Right cardiac atrium (tissue), 5 donors: ENCODE measurements at regions of chr2 and their contacts with region 1.

Region 1: DNA sequence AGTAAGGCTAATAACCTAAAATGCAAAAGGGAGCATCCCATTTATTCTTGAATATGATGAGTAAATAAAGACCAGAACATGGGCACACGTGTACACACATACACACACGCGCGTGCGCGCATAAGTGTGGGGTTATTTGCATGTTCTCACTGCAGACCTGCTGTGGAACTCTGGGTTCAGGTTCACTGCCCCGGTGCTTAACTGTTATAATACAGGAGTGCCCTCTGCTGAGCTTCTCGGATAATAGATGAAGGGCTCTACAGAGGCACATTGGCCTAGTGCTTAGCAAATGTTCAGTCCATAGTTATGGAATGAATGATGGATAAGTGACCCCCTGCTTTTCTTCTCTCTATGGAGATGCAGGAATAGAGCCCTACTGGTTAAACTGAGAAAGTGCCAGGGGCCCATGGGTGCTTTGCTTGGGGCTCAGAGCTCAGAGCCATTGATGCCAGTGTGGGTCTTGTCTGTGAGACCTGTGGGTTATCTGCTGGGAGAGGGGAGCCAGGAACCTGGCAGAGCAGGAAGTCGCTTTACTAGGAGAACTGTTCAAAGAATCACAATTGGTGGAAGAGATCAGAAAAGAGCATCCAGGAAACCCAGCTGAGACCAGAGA is 3.6 kb upstream of the ARL4C start:
- DNase-seq: peak in 2 of 3 donors; percentile 32 to 69
- ATAC-seq: peak; percentile 50 to 58
- H3K4me3 ChIP-seq: no peak overlapping the region
- H3K27ac ChIP-seq: no peak overlapping the region
- H3K4me1 ChIP-seq: peaks cover 6% of the 10 kb centered on the region
- H3K27me3 ChIP-seq: no peaks in the 10 kb centered on the region

Region 2: DNA sequence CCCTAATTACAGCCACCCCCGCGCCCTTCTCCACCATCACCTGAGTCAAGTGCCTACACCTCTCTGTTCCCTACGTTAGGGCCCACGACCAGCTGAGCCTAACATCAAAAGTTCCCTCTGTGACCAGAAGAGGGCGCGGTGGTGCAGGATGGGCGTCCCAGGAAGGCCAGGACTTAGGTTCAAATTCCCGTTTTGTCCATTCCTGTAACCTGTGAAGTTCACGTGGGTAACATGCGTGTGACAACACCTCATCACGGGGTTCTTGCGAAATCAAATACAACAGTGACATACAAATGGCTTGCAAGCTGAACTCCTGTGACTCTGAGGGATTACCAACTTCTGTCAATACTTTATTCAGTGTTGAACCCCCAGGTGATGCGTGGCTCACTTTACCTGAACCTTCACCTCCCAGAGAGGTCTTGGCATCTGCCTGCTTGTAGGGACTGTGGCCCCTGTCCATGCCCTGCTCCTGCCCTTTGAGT is 211.5 kb before region 1 on chr2:
- intact Hi-C with region 1: loop called (anchors 5 to 10 kb)
- DNase-seq: peak; percentile 53 to 77 (median 70)
- ATAC-seq: peak; percentile 30 to 40
- H3K4me3 ChIP-seq: no peak overlapping the region
- H3K27ac ChIP-seq: no peak overlapping the region
- H3K4me1 ChIP-seq: peaks cover 10% of the 10 kb centered on the region
- H3K27me3 ChIP-seq: no peaks in the 10 kb centered on the region